ENCODE measurements at regions of chr2 and their contacts with region 1.

Region 1: GRCh38 chr2:7437716-7438632 is 520.8 kb downstream of the RNF144A start:
- DNase-seq: no peak
- H3K4me3 Mint-ChIP-seq: peak overlapping the region; percentile 54
- H3K27ac Mint-ChIP-seq: peak overlapping the region; percentile 88
- H3K4me1 Mint-ChIP-seq: peaks cover 86% of the 10 kb centered on the region
- H3K27me3 Mint-ChIP-seq: no peaks in the 10 kb centered on the region

Region 2: DNA sequence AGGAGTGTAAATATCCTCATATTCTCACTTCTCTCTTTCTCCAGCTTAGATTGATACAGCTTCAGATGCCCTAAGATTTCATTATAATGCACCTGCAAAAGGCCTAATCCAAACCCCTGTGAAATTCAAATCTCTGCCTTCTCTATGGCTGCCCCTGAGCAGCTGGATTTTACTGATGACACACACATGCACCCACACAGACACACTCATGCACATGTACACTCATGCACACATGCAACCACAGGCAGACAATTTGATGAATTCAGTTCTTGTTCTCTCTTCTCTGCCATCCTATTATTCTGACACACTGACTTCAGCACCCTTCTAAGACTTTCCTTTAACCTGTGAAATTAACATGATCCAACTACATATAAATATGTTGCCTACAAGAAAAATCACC is 42.5 kb after region 1 on chr2:
- intact Hi-C with region 1: no loop called
- DNase-seq: no peak
- H3K4me3 Mint-ChIP-seq: no peak overlapping the region
- H3K27ac Mint-ChIP-seq: no peak overlapping the region
- H3K4me1 Mint-ChIP-seq: peaks cover 28% of the 10 kb centered on the region
- H3K27me3 Mint-ChIP-seq: peaks cover 2% of the 10 kb centered on the region

Region 3: GRCh38 chr2:7523481-7524120 is 85.6 kb after region 1 on chr2:
- intact Hi-C with region 1: loop called (anchors 1 kb)
- DNase-seq: no peak
- H3K4me3 Mint-ChIP-seq: peak overlapping the region; percentile 2
- H3K27ac Mint-ChIP-seq: peak overlapping the region; percentile 90
- H3K4me1 Mint-ChIP-seq: peaks cover 77% of the 10 kb centered on the region
- H3K27me3 Mint-ChIP-seq: no peaks in the 10 kb centered on the region

Region 4: DNA sequence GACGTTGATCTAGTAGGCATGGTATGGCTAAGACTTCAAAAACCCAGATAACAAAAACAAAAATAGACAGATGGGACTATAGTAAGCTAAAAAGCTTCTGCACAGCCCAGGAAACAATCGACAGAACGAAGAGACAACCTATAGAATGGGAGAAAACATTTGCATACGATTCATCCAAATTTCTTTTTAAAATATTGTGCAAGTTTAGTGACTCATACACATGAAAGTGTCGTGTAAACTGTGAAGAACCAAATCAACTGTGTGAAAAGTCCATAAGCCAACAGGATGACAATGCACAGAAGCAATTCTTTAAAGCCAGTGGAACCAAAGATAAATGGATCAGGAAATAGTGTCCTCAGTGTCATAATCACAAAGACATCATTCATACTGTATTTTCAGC is 150.3 kb after region 1 on chr2:
- intact Hi-C with region 1: loop called (anchors 1 kb)
- DNase-seq: no peak
- H3K4me3 Mint-ChIP-seq: peak overlapping the region; percentile 28
- H3K27ac Mint-ChIP-seq: peak overlapping the region; percentile 61
- H3K4me1 Mint-ChIP-seq: peaks cover 37% of the 10 kb centered on the region
- H3K27me3 Mint-ChIP-seq: no peaks in the 10 kb centered on the region

Region 5: GRCh38 chr2:7845332-7845731 is 407.4 kb after region 1 on chr2:
- intact Hi-C with region 1: loop called (anchors 2 kb)
- DNase-seq: no peak
- H3K4me3 Mint-ChIP-seq: no peak overlapping the region
- H3K27ac Mint-ChIP-seq: no peak overlapping the region
- H3K4me1 Mint-ChIP-seq: peaks cover 57% of the 10 kb centered on the region
- H3K27me3 Mint-ChIP-seq: no peaks in the 10 kb centered on the region

Region 6: DNA sequence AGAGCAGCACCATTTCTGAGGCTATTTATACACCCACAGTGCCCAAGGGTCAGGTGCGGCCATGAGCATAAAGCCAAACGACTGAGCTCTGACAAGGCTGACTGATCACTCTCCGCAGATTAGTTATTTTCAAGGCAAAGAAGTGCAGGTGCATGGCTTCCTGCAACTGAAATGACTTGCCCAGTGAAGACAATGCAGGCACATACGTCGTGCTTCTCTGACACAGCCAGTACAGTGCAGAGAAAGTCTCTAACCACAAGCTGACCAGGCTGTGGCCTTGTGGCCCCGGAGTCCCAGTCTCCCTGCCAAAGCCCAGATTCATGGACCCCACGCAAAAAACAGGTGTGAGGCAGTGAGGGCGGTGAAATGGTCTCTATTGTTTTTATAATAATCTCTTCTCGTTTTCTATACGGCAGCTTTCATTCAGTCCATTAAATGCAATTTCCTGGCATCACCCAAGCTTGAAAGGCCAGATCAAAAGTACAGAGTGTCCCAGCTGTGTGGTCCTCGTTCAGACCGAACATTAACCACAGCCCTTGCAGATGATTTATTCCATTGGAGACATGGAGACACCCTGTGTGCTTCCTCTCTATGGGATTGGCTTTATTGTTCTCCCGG is 796.9 kb after region 1 on chr2:
- intact Hi-C with region 1: loop called (anchors 1 kb)
- DNase-seq: no peak
- H3K4me3 Mint-ChIP-seq: no peak overlapping the region
- H3K27ac Mint-ChIP-seq: no peak overlapping the region
- H3K4me1 Mint-ChIP-seq: peaks cover 53% of the 10 kb centered on the region
- H3K27me3 Mint-ChIP-seq: peaks cover 9% of the 10 kb centered on the region

Measured in activated T-helper 1 cell treated with anti-CD3 and anti-CD28 coated beads, Interleukin-12 subunit alpha, Interleukin-12 subunit beta, Interleukin-2, Interleukin-4 antibody, amounts not matched to agents 30 ng/mL and 10 ng/mL and 1 ng/mL, durations not matched to agents 14 hours and 24 hours and 36 hours (primary cell).